Heart right ventricle (tissue), 16 donors: ENCODE measurements at regions of chr16 and their contacts with region 1.

Region 1: GRCh38 chr16:8708536-8708935 is 34.1 kb downstream of the ABAT start:
- DNase-seq: no peak
- ATAC-seq: no peak
- H3K4me3 ChIP-seq: no peak overlapping the region
- H3K27ac ChIP-seq: no peak overlapping the region
- H3K4me1 ChIP-seq: no peaks in the 10 kb centered on the region
- H3K27me3 ChIP-seq: no peaks in the 10 kb centered on the region
- CTCF ChIP-seq: no peak

Region 2: DNA sequence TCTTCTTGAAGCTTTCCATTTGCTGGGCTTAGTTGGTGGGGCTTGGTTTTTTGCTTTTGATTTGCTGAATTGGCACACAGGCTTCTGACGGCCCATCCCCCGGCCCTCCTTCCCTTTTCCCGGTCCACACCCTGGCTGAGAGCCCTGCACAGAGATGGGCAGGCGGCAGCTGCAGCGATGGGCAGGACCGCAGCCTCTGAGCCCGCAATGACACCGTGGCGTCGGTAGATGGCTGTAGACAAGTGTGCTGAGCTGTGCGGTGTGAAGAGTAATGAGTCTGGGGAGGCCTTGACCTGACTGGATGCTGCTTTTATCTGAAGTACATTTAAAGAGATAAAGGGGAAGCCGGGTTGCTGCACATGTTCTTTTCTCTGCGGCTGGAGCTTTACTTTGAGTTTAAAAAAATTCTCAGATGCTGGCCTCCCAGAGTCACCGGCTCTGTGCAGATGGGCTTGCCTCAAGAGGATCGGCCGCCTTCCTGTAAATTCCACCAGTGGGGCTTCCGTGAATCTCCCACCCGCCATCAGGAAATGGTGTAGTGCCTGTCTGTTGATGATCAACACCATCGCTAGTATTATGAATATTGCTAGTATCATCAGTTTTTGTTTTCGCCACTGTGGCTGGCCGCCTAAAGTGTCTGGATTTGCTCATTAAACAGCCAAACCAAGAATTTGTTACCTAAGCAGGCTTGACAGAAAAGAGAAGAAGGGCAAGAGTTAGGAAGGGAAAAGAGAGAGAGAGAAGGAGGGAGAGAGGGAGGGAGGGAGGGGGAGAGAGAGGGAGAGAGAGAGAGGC is 1621.5 kb before region 1 on chr16:
- intact Hi-C with region 1: loop called in 1 of 10 experiments (anchors 5 kb)
- DNase-seq: peak; percentile 6 to 33
- ATAC-seq: peak in 7 of 8 donors; percentile 56 to 91 (median 75)
- H3K4me3 ChIP-seq: no peak overlapping the region
- H3K27ac ChIP-seq: no peak overlapping the region
- H3K4me1 ChIP-seq: no peaks in the 10 kb centered on the region
- H3K27me3 ChIP-seq: peaks cover 0 to 55% (median 14%) of the 10 kb centered on the region in 7 donors
- CTCF ChIP-seq: peak in 7 of 9 donors; percentile 5 to 40 (median 37)